ENCODE measurements at regions of chr19 and their contacts with region 1.

Region 1: DNA sequence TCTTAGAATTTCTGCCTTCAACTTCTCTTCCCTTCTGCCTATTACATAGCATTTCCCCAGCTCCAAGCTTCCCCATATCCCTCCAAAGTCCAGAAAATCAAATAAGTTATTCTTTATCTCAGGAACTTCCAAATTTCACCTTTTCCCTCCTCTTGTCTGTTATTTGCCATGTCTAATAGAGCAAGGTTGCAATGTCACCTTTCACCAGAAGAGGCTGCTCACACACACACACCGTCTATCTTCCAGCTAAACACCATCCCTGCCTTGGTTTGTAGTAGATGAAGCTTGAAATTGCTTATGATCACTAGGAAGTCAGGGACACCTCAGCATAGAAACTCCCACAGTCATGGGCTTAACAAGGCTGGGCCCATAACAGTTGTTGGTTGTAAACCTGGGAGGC is 48.4 kb downstream of the ZNRF4 start:
- DNase-seq: no peak
- H3K4me3 ChIP-seq: no peak overlapping the region
- H3K27ac ChIP-seq: no peak overlapping the region
- H3K4me1 ChIP-seq: peaks cover 0 to 3% (median 1%) of the 10 kb centered on the region in 4 experiments; a peak in 5 of 7 replicates
- H3K27me3 ChIP-seq: peaks cover 12 to 32% (median 26%) of the 10 kb centered on the region in 4 experiments
- CTCF ChIP-seq: peak in 2 of 3 experiments; percentile 32 to 55; a peak in 3 of 4 replicates
- EP300 ChIP-seq: no peak
- POLR2A ChIP-seq: no peak
- RAD21 ChIP-seq: no peak

Region 2: DNA sequence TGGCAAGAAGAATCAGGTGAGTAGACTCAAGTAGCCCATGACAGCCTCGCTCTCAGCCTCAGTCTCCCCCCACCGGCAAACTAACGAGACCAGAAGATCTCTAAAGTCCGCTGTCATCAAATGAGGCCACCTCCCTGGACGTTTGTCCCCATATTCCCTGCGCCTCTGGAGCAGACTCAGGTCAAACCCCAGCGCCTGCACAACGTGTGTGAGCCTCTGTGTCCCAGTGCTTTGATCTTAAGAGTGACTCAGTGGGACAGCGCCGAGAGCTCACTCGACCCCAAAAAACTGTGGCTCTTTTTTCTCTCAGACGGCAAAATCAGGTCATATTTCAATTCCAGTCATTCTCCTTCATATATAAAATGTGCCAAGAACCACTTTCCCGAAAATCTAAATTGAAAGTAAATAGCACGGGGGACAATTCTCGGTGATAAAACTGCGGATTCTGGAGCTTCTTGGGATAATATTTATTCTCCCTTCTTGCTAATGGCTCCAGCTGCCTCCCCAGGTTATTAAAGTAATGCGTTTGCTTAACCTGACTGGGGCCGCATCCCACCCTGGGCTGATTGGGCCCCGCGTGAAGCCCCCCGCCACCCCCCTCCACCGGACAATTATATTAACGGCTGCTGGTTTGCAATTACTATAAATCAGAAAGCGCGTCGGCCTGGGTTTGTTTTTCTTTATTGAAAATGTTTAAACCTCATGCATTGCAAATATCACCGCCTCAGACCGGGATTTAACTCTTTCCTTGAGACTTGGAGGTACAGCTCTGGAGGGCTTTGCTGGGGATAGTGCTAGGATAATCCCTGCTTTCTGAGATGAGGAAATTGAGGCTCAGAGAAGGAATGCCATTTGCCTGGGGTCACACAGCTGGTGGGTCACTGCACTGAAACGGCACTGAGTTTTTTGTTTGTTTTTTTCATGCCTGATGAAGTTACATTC is 85.8 kb before region 1 on chr19:
- CTCF ChIA-PET with region 1: no interaction called
- POLR2A ChIA-PET with region 1: no interaction called
- DNase-seq: no peak
- H3K4me3 ChIP-seq: no peak overlapping the region
- H3K27ac ChIP-seq: no peak overlapping the region
- H3K4me1 ChIP-seq: peaks cover 0 to 5% (median 0%) of the 10 kb centered on the region in 4 experiments; a peak in 3 of 7 replicates
- H3K27me3 ChIP-seq: no peaks in the 10 kb centered on the region
- CTCF ChIP-seq: no peak
- EP300 ChIP-seq: no peak
- POLR2A ChIP-seq: no peak
- RAD21 ChIP-seq: no peak

Region 3: DNA sequence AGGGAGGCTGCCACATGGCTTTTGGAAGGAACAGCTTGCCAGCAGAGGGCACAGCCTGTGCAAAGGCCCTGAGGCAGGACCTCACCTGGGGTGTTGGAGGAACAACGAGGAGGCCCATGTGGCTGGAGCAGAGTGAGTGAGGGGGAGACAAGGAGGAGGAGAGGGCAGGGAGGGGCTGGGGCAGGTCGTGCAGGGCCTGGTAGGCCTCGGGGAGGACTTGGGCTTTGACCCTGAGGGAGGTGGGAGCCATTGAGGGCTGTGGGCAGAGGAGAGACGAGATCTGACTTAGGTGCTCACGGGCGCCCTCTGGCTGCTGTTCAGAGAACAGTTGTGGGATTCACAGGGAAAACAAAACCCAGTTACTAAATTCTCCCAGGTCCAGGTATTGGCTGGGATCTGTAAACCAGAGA is 23.2 kb before region 1 on chr19:
- CTCF ChIA-PET with region 1: interaction called, 10 read pairs
- POLR2A ChIA-PET with region 1: no interaction called
- DNase-seq: peak; percentile 19 to 80
- H3K4me3 ChIP-seq: no peak overlapping the region
- H3K27ac ChIP-seq: no peak overlapping the region
- H3K4me1 ChIP-seq: peaks cover 0 to 7% (median 0%) of the 10 kb centered on the region in 4 experiments; a peak in 2 of 7 replicates
- H3K27me3 ChIP-seq: peaks cover 0 to 4% (median 0%) of the 10 kb centered on the region in 4 experiments; a peak in 3 of 7 replicates
- CTCF ChIP-seq: peak; percentile 59 to 79 (median 76)
- EP300 ChIP-seq: no peak
- POLR2A ChIP-seq: no peak
- RAD21 ChIP-seq: peak; percentile 47 to 52; a peak in 3 of 4 replicates

Region 4: GRCh38 chr19:5487222-5487621 is 16.4 kb before region 1 on chr19:
- CTCF ChIA-PET with region 1: interaction called, 17 read pairs
- POLR2A ChIA-PET with region 1: no interaction called
- DNase-seq: no peak
- H3K4me3 ChIP-seq: no peak overlapping the region
- H3K27ac ChIP-seq: no peak overlapping the region
- H3K4me1 ChIP-seq: peaks cover 0 to 7% (median 0%) of the 10 kb centered on the region in 4 experiments; a peak in 2 of 7 replicates
- H3K27me3 ChIP-seq: peaks cover 0 to 3% (median under 1%) of the 10 kb centered on the region in 4 experiments; a peak in 4 of 7 replicates
- CTCF ChIP-seq: no peak
- EP300 ChIP-seq: no peak
- POLR2A ChIP-seq: no peak
- RAD21 ChIP-seq: no peak

Region 5: DNA sequence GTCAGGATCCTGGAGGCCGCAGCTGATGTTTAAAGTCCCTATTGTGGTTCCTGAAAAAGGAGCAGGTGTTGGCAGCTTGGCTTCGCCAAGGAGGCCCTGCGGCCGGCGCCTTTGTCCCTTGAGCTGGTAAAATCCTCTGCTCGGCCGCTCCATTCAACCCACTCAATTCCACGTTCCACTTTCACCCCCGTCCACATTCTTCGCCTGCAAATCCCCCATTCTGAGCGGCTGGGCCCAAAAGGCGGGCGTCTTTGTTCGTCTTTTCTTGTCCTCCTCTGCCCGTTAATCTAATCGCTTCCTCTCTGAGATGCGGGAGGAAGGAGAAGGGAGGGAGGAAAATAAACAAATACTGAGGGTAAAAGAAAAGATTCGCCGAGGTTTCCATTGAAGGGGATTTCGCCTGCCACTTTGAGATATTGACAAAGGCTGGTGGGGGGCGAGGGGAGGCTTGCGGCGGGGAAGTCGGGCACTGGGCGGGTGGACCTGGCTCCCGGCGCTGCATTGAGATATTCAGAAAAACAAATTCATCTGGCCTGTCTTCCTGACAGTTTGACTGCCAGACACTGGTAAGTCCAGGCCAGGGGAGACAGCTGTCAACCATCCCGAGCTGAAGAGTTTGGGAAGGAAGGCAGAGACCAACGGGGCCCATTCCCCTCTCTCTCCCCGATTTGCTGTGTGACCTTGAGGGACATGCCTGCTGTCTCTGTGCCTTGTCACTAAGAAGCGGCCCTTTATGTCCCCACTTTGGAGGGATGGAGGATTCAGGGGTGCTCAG is 10.8 kb before region 1 on chr19:
- CTCF ChIA-PET with region 1: interaction called, 17 read pairs
- POLR2A ChIA-PET with region 1: no interaction called
- DNase-seq: no peak
- H3K4me3 ChIP-seq: no peak overlapping the region
- H3K27ac ChIP-seq: no peak overlapping the region
- H3K4me1 ChIP-seq: peaks cover 0 to 6% (median 1%) of the 10 kb centered on the region in 4 experiments; a peak in 2 of 7 replicates
- H3K27me3 ChIP-seq: peaks cover 12 to 34% (median 30%) of the 10 kb centered on the region in 4 experiments
- CTCF ChIP-seq: no peak
- EP300 ChIP-seq: no peak
- POLR2A ChIP-seq: no peak
- RAD21 ChIP-seq: no peak

Region 6: GRCh38 chr19:5515737-5516136 is 12.1 kb after region 1 on chr19:
- CTCF ChIA-PET with region 1: interaction called, 58 read pairs
- POLR2A ChIA-PET with region 1: no interaction called
- DNase-seq: peak in 1 of 2 experiments; percentile 60
- H3K4me3 ChIP-seq: no peak overlapping the region
- H3K27ac ChIP-seq: no peak overlapping the region
- H3K4me1 ChIP-seq: no peaks in the 10 kb centered on the region
- H3K27me3 ChIP-seq: no peaks in the 10 kb centered on the region; a peak in 2 of 7 replicates
- CTCF ChIP-seq: peak; percentile 65 to 87 (median 74)
- EP300 ChIP-seq: no peak
- POLR2A ChIP-seq: no peak
- RAD21 ChIP-seq: peak; percentile 73 to 81

Region 7: GRCh38 chr19:5536337-5536894 is 32.8 kb after region 1 on chr19:
- CTCF ChIA-PET with region 1: interaction called, 21 read pairs
- POLR2A ChIA-PET with region 1: no interaction called
- DNase-seq: peak; percentile 70 to 91
- H3K4me3 ChIP-seq: peak overlapping the region in 3 of 4 experiments; percentile 19 to 41 (median 29); a peak in 6 of 8 replicates
- H3K27ac ChIP-seq: peak overlapping the region; percentile 41; the same call in 1 of the 2 replicates
- H3K4me1 ChIP-seq: peaks cover 2 to 15% (median 13%) of the 10 kb centered on the region in 4 experiments
- H3K27me3 ChIP-seq: no peaks in the 10 kb centered on the region; a peak in 1 of 7 replicates
- CTCF ChIP-seq: no peak
- EP300 ChIP-seq: no peak; a peak in 1 of 3 replicates
- POLR2A ChIP-seq: no peak; a peak in 1 of 3 replicates
- RAD21 ChIP-seq: 0 out of 4 replicates have a peak, but pooled peaks of 1 of the 2 experiments have one; percentile 0

Measured in H1 (cell line).